Naive thymus-derived CD8-positive, alpha-beta T cell (primary cell): ENCODE measurements at regions of chr14 and their contacts with region 1.

Region 1: DNA sequence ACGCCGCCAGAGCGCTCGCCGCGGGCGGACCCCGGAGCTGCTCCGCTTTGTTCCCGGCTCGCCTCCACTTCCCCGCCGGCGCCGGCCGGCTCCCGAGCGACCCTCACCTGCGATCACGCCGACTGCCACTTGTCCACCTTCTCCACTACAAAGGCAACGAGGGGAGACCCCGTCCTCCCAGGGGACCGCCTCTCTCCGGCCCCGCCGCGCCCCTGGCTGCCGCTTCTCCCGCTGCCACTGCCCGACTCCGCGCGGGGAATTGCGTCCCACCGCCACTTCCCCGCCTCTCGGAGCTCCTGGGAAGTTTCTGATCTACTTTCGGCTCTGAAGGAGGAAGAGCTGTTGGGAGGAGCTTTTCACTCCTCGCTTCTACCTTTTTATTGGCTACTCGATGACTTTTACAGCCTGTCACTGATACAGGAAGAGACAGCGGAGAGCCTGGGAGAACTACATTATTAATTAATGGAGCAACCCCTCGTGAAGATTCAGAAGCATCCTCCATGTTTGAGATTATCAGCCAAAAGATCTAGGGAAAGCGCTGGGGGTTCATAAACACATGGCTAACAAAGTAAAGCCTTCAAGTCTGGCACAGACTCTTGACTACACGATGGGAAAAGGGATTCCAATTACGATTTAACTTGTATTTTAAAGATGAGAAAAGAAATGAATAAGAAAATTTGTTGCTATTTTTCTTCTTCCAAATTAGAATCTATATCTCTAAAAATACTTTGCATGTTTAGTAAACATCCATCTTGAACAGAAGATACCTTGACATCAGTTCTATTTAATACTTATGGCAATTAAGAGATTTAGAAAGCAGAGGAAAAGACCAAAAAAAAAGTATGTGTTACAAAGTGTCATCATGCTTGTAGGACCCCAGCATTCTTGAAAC is at the start of gene BAZ1A:
- DNase-seq: peak in 9 of 10 donors; percentile 2 to 68 (median 28)
- ATAC-seq: peak in 1 of 2 donors; percentile 18
- H3K4me3 Mint-ChIP-seq: peak within 1 kb of the TSS; percentile 98 to 100 (median 100)
- H3K27ac Mint-ChIP-seq: peak within 1 kb of the TSS; percentile 96 to 100 (median 99)
- H3K4me1 Mint-ChIP-seq: peaks cover 16 to 41% (median 30%) of the 10 kb centered on the region in 4 donors
- H3K27me3 Mint-ChIP-seq: no peaks in the 10 kb centered on the region
- polyA plus RNA-seq, gene BAZ1A: 8.5 to 10.7 (median 9.1) TPM

Region 2: DNA sequence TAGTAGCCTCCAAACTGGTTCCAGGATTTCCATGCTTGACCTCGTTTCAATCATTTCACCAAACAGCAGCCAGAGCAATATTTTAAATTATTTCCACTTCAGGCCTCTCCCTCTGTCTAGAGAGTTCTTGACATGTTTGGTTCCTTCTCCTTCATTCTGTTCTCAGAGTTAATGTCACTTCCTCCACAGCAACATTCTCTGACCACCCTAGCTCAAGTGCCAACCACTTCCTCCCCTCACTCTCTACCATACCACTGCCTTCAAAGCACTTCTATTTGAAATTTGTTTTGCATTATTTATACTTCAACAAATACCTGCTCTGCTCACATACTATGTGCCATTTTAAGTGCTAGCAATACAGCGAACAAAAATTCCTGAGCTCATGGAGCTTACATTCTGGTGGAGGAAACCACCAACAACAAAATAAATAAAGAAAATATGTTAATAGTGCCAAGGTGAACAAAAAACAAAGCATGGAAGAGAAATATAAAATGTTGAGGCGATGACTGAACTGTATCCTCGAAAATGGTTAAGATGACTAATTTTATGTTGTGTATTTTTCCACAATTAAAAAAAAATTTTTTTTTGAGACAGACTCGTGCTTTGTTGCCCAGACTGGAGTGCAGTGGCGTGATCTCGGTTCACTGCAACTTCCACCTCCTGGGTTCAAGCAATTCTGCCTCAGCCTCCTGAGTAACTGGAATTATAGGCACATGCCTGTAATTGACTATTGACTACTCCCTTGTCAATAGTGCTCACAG is 17.4 kb before region 1 on chr14:
- POLR2A ChIA-PET with region 1: interaction called, 23 read pairs
- DNase-seq: peak in 6 of 10 donors; percentile 6 to 73 (median 54)
- ATAC-seq: peak; percentile 86 to 95
- H3K4me3 Mint-ChIP-seq: peak overlapping the region; percentile 6 to 66 (median 56)
- H3K27ac Mint-ChIP-seq: peak overlapping the region; percentile 24 to 91 (median 82)
- H3K4me1 Mint-ChIP-seq: peaks cover 17 to 55% (median 50%) of the 10 kb centered on the region in 4 donors
- H3K27me3 Mint-ChIP-seq: no peaks in the 10 kb centered on the region

Region 3: DNA sequence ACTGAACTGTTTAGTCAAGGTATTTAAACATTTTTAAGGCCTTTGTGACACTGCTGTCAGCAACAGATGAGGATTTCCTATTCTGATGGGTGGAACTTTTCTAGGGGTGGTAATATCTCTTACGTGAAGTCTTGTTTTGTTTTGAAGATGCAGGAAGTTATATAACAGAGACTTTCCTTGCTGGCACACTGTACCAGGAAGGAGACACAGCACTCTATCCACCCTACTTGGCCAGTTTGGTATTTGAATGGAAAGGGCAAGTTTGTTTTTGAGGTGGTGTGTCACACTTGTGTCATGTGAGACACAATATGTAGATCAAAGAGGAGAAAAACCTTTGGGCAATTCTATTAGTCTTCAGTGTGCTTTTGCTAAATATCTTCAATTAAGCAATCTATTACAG is 55.9 kb after region 1 on chr14:
- POLR2A ChIA-PET with region 1: interaction called, 31 read pairs
- DNase-seq: peak in 9 of 10 donors; percentile 19 to 86 (median 61)
- ATAC-seq: peak; percentile 92 to 95
- H3K4me3 Mint-ChIP-seq: peak overlapping the region; percentile 6 to 81 (median 63)
- H3K27ac Mint-ChIP-seq: peak overlapping the region; percentile 93 to 99 (median 97)
- H3K4me1 Mint-ChIP-seq: peaks cover 13 to 37% (median 31%) of the 10 kb centered on the region in 4 donors
- H3K27me3 Mint-ChIP-seq: no peaks in the 10 kb centered on the region

Region 4: DNA sequence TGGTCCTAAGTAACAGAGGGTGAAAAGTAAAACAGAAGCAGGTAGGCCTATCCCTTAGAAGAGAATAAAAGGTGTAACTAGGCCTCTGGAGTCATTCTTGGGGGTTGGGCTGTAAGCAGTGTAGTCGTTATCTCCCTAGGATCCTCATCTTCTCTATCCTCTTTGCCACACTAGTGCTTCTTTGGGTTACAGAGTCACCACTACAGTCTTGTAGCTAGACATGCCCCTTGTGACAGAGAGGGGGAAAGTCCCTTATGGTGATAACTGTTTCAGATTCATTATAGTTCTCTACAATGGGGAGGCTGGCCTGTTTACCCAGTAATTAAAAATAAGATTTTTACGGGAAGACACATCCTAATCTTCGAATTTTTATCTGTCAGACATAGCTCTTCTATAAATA is 91.1 kb after region 1 on chr14:
- POLR2A ChIA-PET with region 1: no interaction called
- DNase-seq: no peak
- ATAC-seq: peak in 1 of 2 donors; percentile 27
- H3K4me3 Mint-ChIP-seq: no peak overlapping the region
- H3K27ac Mint-ChIP-seq: peak overlapping the region in 6 of 10 donors; percentile 5 to 64 (median 52)
- H3K4me1 Mint-ChIP-seq: peaks cover 3 to 10% (median 9%) of the 10 kb centered on the region in 4 donors
- H3K27me3 Mint-ChIP-seq: no peaks in the 10 kb centered on the region